Posterior vena cava (tissue), 2 donors: ENCODE measurements at regions of chr17 and their contacts with region 1.

Region 1: DNA sequence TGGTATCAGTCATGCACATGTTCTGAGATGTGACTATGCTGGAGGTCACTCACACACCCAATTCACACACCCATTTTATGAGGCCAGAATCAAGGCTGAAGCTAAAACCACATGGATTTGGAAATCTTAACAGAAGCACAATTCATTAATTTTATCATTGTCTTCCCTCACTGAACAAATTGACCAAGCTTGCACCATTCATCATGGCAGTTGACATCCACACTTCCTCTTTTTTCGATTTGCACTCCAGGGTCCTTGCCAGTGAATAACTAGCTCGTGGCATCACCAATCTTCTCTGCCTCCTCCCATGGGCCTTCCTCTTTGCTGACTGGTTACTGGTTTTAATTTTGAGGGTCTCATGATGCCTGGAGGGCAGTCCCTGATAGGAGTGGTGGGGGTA is 123.0 kb upstream of the ASIC2 start:
- DNase-seq: no peak

Region 2: GRCh38 chr17:33292184-33292980 is 123.7 kb before region 1 on chr17:
- intact Hi-C with region 1: no loop called
- DNase-seq: no peak

Region 3: GRCh38 chr17:33377837-33378595 is 38.1 kb before region 1 on chr17:
- intact Hi-C with region 1: no loop called
- DNase-seq: no peak

Region 4: GRCh38 chr17:33451221-33451620 is 35.1 kb after region 1 on chr17:
- intact Hi-C with region 1: loop called in 1 of 2 experiments (anchors 2 kb)
- DNase-seq: no peak

Region 5: DNA sequence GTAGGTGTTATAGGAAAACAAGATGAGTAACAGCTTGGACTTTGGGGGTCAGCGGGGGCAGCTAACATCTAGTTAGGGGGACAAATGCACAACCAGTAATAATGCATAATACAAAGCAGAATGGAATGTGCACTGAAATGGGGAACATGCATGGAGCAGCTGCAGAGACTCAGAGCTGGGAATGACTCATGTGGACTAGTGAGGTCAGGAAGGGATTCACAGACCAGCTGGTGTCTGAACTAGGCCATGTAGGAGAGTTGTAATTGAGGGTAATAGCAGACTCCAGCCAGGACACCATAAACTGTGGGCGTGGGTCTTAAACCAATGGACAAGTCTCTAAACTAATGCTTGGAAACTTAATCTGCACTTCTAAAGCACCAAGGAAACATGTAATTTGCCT is 53.8 kb after region 1 on chr17:
- intact Hi-C with region 1: no loop called
- DNase-seq: no peak